Common myeloid progenitor, CD34-positive (primary cell): ENCODE measurements at regions of chr5 and their contacts with region 1.

Region 1: GRCh38 chr5:131589510-131590348 is 45.3 kb downstream of the RAPGEF6 start:
- DNase-seq: peak; percentile 72 to 86 (median 84)
- H3K4me3 ChIP-seq: no peak overlapping the region
- H3K27ac ChIP-seq: no peak overlapping the region
- H3K4me1 ChIP-seq: peaks cover 4 to 23% (median 15%) of the 10 kb centered on the region in 4 experiments
- H3K27me3 ChIP-seq: no peaks in the 10 kb centered on the region

Region 2: DNA sequence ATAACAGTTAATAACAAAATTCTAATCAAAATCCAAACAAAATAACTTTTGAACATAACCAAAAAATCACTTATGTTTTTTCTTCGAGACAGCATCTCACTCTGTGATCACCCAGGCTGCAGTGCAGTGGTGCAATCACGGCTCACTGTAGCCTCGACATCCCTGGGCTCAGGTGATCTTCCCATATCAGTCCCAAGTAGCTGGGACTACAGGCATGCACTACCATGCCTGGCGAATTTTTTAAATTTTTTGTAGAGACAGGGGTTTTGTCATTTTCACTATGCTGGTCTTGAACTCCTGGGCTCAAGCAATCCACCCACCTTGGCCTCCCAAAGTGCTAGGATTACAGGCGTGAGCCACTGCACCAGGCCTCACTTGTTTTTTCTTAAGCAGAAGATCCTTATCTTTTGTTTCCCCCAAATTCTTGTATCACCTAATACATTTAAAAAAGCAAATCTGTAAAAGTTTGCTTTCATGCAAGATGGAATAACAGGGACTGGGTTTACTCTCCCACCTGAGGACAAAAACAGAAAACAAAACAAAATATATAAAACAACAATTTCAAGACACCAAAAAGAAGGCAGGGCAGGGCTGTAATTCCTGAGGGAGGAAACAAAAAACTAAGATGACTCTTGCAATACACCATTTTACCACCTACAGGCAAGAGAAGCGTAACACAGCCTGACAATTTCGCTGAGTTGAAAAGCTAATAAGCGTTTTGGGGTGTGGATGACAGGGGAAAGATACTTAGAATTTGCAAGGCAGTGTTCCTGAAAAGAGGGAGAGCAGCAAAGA is 26.1 kb before region 1 on chr5:
- CTCF ChIA-PET with region 1: interaction called, 11 read pairs
- POLR2A ChIA-PET with region 1: no interaction called
- DNase-seq: peak in 1 of 3 donors; percentile 28
- H3K4me3 ChIP-seq: no peak overlapping the region
- H3K27ac ChIP-seq: no peak overlapping the region
- H3K4me1 ChIP-seq: peaks cover 0 to 10% (median 2%) of the 10 kb centered on the region in 4 experiments
- H3K27me3 ChIP-seq: no peaks in the 10 kb centered on the region

Region 3: GRCh38 chr5:131640043-131640856 is 50.5 kb after region 1 on chr5:
- CTCF ChIA-PET with region 1: interaction called, 16 read pairs
- POLR2A ChIA-PET with region 1: interaction called, 3 read pairs
- DNase-seq: peak; percentile 81 to 97 (median 93)
- H3K4me3 ChIP-seq: peak overlapping the region in 1 of 7 experiments; percentile 45
- H3K27ac ChIP-seq: peak overlapping the region; percentile 49 to 56
- H3K4me1 ChIP-seq: peaks cover 32 to 61% (median 39%) of the 10 kb centered on the region in 4 experiments
- H3K27me3 ChIP-seq: no peaks in the 10 kb centered on the region

Region 4: DNA sequence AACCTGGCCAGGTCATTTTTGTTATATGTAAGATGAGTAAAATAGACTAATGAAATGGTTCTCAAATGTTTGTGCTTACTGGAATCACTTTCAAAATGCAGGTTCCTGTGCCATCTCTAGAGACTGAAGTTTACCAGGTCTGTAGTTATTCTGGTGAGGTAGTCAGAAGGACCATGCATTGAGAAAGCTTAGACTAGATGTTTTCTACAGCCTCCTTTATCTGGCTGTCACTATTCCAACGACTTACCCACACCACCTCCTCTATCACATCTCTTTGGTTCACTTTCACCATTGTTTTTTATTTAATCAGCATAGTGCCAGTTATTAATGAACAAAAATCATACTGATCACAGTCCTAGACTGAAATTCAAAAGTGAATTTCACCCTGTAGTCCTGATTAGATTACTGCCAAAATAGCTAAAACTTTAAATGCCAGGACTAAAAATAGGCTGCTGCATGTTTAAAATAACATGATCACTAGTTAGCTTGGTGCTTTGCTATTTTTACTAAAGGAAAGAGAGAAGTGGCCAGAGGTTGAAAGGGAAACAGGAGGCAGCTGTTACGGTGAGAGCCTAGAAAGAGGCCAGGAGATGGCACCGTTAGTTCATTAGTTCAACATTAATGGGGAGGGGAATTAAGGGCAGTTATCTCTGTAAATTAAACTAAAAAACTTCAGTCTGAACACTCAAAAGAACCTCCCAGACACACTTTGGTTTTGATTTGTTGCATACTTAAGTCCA is 221.0 kb after region 1 on chr5:
- CTCF ChIA-PET with region 1: interaction called, 16 read pairs
- POLR2A ChIA-PET with region 1: no interaction called
- DNase-seq: peak; percentile 53 to 79 (median 76)
- H3K4me3 ChIP-seq: no peak overlapping the region
- H3K27ac ChIP-seq: no peak overlapping the region
- H3K4me1 ChIP-seq: peaks cover 0 to 5% (median 2%) of the 10 kb centered on the region in 4 experiments
- H3K27me3 ChIP-seq: no peaks in the 10 kb centered on the region